Mammary epithelial cell (primary cell): ENCODE measurements at regions of chr9 and their contacts with region 1.

Region 1: GRCh38 chr9:93871294-93871693 is 83.9 kb downstream of the BARX1 start:
- DNase-seq: no peak
- H3K4me3 ChIP-seq: no peak overlapping the region
- H3K27ac ChIP-seq: no peak overlapping the region
- H3K4me1 ChIP-seq: no peaks in the 10 kb centered on the region
- H3K27me3 ChIP-seq: no peaks in the 10 kb centered on the region
- CTCF ChIP-seq: no peak

Region 2: DNA sequence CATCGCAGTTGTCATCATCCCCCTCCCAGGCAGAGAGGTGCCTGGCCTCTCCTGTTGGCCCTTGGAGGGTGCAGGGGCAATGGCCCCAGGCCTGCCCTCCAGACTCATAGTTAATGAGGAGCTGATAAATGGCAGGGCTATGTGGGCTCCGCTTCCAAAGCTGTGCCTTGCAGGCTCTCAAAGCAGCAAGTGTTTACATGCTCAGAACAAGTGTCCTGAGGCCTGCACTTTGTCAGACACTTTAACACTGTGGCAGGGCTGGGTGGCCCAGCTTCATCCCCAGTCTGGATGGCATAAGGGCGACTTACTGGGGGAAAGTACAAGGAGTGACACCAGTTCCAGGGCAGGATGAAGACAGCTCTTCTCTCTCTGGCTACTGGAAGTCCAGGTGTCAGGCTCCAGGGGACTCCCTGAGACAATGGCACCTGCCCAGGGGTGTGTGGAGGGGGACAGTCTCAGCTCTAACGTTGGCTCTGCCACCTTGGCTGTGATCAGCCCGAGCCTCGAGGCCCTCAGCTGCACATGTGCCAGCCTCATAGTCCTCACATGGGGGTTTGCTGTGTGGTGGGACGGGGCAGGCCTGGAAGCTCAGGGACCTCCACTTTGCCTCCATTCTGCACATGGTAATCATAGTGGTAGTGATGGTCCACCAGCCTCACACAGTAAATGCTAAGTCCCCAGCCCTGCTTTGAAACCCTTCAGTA is 69.6 kb before region 1 on chr9:
- CTCF ChIA-PET with region 1: no interaction called
- dilution Hi-C with region 1: loop called (anchors 5 kb)
- in situ Hi-C with region 1: no loop called
- intact Hi-C with region 1: no loop called
- DNase-seq: no peak
- H3K4me3 ChIP-seq: no peak overlapping the region
- H3K27ac ChIP-seq: no peak overlapping the region
- H3K4me1 ChIP-seq: no peaks in the 10 kb centered on the region
- H3K27me3 ChIP-seq: no peaks in the 10 kb centered on the region
- CTCF ChIP-seq: no peak

Region 3: DNA sequence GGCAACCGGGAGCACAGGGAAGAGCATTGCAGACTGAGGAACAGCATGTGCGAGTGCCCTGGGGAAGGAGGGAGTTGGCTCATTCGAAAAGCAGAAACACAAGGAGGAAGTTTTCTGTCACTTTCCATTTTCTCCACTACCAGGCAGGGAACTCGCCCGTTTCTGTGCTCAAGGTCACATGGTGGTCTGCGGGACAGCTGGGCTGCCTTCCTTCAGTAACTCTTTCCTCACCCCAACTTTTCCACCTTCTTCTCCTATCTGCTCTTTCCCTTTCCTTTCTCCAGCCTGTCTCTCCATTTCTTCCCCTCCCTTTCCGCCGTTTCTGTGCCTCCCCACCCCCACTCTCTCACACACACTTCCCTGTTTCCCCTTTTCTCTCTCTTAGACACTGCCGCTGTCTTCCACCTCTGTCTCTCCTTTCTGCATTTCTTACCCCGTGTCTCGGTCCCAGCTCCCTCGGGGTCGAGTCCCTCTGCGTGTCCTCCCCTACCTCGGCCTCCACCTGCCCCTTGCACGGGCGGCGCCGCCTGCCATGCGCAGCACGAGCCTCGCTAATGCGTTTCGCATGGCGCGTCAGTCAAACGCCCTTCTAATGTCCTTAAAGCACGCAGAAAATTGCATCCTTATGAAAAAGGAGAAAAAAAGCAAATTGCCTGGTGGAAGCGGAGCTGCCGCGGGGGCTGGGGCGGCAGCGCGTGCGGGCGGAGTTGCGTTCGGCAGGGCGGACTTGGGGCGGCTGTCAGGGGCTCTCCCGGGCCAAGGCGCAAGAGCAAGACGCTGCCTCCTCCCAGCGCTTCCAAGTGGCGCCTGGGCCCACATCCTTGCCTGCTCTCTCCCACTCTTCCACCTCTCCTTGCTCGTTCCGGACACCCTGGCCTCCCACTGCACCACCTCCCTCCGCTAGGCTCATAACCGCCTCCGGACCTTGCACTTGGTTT is 74.4 kb after region 1 on chr9:
- CTCF ChIA-PET with region 1: no interaction called
- dilution Hi-C with region 1: loop called (anchors 10 kb)
- in situ Hi-C with region 1: no loop called
- intact Hi-C with region 1: no loop called
- DNase-seq: no peak
- H3K4me3 ChIP-seq: peak overlapping the region in 1 of 3 experiments; percentile 26
- H3K27ac ChIP-seq: no peak overlapping the region
- H3K4me1 ChIP-seq: peaks cover under 1% of the 10 kb centered on the region
- H3K27me3 ChIP-seq: peaks cover 48% of the 10 kb centered on the region
- CTCF ChIP-seq: no peak